ENCODE measurements at regions of chr5 and their contacts with region 1.

Region 1: DNA sequence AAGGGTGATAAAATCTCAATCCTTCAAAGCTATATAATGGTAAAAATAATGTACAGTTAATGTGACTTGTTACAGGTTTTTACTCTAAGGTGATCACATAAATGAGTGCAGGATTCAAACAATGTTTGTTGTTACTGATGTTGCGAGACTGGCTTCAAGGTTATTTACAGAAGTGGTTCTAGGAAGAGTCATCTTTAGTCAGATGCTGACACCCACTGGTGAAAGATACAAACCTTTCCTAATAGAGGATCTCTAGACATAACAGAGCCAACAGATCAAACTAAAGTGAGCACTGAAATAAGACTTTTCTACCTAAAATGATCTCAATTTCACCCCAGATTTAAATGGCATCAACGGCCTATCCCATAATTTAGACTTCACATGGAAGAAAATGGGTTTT is 20.2 kb downstream of the ARSB start:
- DNase-seq: peak; percentile 76
- H3K4me3 ChIP-seq: no peak overlapping the region
- H3K27ac ChIP-seq: no peak overlapping the region
- H3K4me1 ChIP-seq: no peaks in the 10 kb centered on the region
- CTCF ChIP-seq: peak; percentile 84

Region 2: DNA sequence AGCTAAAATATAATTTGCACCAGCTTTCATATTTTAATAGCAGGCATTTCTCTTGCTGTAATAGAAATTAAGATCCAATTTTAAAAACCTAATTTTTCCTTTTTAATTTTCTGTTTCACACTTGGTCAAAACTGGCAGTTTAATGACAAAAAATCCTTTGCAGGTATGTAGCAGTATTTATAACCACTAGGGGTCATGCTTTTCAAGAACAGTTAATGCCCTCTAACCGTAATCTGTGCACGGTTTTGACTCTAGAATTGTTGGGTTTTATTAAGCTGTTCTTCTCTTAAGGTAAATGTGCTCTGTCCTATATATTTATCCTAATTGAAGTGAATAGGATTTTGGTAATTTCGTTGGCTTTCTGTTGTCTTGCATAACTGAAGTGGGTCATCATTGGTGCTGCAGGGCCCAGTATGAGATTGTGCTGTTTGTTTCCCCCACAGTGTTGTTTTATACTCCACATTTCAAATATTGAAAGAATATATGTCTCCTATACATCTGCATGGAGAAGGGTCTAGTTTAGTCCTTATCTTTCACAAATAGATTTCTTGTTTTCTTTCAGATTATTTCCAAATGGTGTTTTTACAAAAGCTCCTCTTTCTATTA is 497.0 kb before region 1 on chr5:
- CTCF ChIA-PET with region 1: no interaction called
- POLR2A ChIA-PET with region 1: interaction called, 3 read pairs
- intact Hi-C with region 1: loop called (anchors 5 kb)
- DNase-seq: peak; percentile 70
- H3K4me3 ChIP-seq: no peak overlapping the region
- H3K27ac ChIP-seq: no peak overlapping the region
- H3K4me1 ChIP-seq: no peaks in the 10 kb centered on the region
- CTCF ChIP-seq: peak; percentile 96

Region 3: DNA sequence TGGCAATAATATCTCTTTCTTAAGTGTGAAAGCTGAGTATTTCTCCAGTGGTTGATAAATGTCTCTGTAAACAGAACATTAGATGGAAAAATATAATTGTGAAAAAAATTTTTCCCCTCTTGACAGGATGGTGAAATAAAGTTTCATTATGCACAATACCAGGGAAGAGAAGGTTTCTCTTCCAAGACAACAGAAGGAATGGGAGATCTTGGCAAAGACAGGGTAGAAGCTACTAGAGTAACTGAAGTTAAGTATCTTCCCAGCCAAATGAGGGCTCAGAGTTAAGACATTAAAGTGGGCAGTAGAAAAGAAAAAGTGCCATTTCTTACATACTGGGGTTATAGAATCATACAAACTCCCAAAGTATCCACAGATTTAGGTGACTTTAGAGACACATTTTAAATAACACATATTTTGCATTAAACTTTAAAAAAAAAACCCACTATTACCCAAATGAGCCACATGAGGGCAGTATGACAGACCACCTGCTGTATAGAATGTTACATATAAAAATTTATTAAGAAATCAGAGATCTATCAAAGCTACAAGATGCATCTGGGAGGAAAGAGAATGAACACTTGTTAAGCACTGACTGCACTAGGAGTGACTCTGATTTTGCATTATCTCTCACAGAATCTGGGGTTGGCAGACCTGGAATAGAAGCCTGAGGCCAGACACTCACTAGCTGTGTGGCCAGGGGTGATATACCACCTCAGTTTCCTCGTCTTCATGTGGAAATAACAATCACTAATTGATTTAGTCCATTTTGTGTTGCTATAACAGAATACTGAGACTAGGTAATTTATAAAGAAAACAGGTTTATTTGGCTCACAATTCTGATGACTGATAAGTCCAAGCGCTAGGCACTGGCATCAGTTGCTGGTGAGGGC is 78.3 kb before region 1 on chr5:
- CTCF ChIA-PET with region 1: no interaction called
- POLR2A ChIA-PET with region 1: interaction called, 3 read pairs
- intact Hi-C with region 1: loop called (anchors 5 kb)
- DNase-seq: peak; percentile 44
- H3K4me3 ChIP-seq: no peak overlapping the region
- H3K27ac ChIP-seq: peak overlapping the region; percentile 39
- H3K4me1 ChIP-seq: peaks cover 28% of the 10 kb centered on the region
- CTCF ChIP-seq: peak; percentile 97

Region 4: DNA sequence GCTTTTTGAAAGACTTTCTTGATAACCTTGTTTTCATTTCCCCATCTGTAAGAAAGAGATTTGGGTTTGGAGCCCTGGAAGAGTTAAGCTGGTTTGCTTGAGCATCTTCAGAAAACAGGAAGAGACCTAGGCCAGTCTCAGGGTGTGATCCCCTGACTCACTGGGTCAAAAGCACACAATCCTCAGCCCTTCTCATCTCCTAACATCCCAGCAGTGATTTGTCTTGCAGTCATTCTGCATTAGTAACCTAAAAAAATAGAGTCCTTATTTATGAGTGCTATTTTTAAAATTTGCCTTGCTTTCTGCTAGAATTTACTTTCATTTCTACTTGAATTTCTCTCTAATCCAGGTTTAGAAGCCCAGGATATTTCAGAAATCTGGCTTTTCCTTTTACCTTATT is 36.6 kb after region 1 on chr5:
- CTCF ChIA-PET with region 1: no interaction called
- POLR2A ChIA-PET with region 1: no interaction called
- intact Hi-C with region 1: no loop called
- DNase-seq: no peak
- H3K4me3 ChIP-seq: no peak overlapping the region
- H3K27ac ChIP-seq: no peak overlapping the region
- H3K4me1 ChIP-seq: no peaks in the 10 kb centered on the region
- CTCF ChIP-seq: no peak

Measured in OCI-LY7 (cell line).